A549 (cell line): ENCODE measurements at regions of chr1 and their contacts with region 1.

Region 1: DNA sequence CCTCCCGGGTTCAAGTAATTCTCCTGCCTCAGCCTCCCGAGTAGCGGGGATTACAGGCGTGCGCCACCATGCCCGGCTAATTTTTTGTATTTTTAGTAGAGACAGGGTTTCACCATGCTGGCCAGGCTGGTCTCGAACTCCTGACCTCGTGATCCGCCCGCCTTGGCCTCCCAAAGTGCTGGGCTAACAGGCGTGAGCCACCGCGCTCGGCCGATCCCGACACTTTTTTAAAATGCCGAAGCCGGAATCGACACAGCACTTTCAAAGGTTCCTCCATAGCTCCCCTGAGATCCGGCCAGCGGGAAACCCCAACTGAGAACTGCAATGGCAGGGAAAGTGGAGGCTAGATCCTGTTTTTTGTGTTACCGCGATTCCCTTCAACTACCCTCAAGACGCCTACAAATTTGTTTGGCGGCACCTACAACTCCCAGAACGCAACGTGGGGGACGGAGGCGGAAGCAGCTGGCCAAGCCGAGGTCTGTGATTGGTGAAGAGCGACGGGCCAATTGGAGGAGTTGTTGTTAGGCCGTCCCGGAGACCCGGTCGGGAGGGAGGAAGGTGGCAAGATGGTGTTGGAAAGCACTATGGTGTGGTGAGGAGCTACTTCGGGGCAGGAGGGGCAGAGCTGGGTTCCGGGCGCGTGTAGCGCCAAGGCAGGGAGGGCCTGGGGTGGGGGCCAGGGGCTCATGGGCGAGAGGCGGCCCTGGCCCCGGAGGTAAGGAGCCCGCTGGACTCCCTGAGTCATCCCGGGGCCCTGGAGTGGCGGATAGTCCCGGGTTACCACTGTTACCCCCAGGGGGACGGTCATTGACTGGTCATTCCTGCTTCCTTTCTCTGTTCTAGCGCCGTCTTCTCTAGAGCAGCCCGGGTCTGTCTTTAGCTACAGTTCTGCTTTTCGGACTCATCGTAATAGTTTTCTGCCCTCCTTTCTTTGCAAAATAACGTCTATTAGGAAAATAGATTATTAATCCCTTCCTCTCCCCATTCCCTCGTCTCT is at the start of gene PSMD4:
- DNase-seq: peak; percentile 99
- ATAC-seq: peak; percentile 96 to 99
- H3K4me3 ChIP-seq: peak within 1 kb of the TSS; percentile 77
- H3K27ac ChIP-seq: peak within 1 kb of the TSS; percentile 93 to 95
- H3K4me1 ChIP-seq: peaks cover 6% of the 10 kb centered on the region; the same call in 1 of the 3 replicates
- CTCF ChIP-seq: no peak
- EP300 ChIP-seq: no peak
- POLR2A ChIP-seq: peak; percentile 92
- RAD21 ChIP-seq: no peak
- polyA plus RNA-seq, gene PSMD4: 241 and 265 TPM in 2 replicates

Region 2: GRCh38 chr1:151047925-151048645 is 206.4 kb before region 1 on chr1:
- CTCF ChIA-PET with region 1: no interaction called
- POLR2A ChIA-PET with region 1: no interaction called
- DNase-seq: peak; percentile 83 to 96
- ATAC-seq: peak; percentile 87 to 91
- H3K4me3 ChIP-seq: peak overlapping the region; percentile 80
- H3K27ac ChIP-seq: peak overlapping the region; percentile 94 to 96
- H3K4me1 ChIP-seq: peaks cover 16% of the 10 kb centered on the region
- CTCF ChIP-seq: peak; percentile 67; the same call in 2 of the 3 replicates
- EP300 ChIP-seq: no peak
- POLR2A ChIP-seq: peak; percentile 53; the same call in 1 of the 2 replicates
- RAD21 ChIP-seq: peak in 1 of 2 experiments; percentile 17; a peak in 1 of 5 replicates

Region 3: DNA sequence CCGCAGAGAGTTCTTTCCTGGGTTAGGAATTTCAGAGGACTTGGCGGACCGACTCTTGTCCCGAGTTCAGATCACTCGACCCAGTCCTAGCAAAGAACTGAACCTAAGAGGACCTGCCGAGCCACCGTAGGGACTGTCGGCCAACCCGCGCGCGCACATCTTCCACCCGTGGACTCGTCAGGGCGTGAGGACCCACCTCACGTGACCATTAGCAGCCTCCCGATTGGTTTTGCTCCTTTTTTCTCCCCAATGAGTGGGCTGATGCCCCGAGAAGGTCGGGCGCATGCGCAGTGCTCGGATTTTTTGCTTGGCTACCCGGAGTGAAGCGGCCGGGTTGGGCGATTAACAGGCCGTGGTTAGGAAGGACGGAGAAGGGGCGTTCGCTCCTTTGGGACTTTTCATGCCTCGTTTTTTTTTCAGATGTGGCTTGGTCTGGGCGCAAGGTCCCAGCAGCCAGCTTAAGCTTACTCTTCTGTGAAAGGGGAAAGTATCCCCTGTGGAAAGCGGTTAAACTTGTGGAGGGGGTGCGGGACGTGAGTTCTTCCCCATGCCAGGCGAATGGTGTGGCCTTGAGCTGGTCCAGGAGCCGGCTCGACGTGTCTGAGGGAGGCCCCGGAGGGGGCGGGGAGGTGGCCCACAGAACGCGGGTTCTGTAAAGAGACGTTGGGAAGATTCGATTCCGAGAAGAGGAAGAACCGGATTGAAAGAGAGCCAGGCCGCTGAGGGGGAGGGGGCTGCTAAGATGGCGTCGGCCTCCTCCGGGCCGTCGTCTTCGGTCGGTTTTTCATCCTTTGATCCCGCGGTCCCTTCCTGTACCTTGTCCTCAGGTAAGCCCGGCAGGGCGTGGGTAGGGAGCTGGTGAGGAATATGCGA is 56.0 kb before region 1 on chr1 and contains the start of gene PIP5K1A:
- CTCF ChIA-PET with region 1: interaction called, 48 read pairs
- POLR2A ChIA-PET with region 1: interaction called, 8 read pairs
- DNase-seq: peak; percentile 98 to 99
- ATAC-seq: peak; percentile 79 to 81
- H3K4me3 ChIP-seq: peak within 1 kb of the TSS; percentile 78
- H3K27ac ChIP-seq: peak within 1 kb of the TSS; percentile 95
- H3K4me1 ChIP-seq: peaks cover 30% of the 10 kb centered on the region
- CTCF ChIP-seq: no peak
- EP300 ChIP-seq: no peak
- POLR2A ChIP-seq: peak; percentile 72
- RAD21 ChIP-seq: no peak
- polyA plus RNA-seq, gene PIP5K1A: 129 and 183 TPM in 2 replicates

Region 4: DNA sequence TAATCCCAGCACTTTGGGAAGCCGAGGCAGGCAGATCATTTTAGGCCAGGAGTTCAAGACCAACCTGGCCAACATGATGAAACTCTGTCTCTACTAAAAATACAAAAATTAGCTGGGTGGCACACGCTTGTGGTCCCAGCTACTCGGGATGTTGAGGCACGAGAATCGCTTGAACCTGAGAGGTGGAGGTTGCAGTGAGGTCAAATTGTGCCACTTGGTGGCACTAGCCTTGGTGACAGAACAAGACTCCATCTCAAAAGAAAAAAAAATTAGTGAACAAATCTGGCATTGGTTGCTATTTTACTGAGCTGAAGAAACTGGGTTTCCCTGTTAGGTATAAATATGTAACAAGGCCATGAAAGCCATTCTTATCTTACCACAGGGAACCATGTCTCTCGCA is 26.9 kb before region 1 on chr1:
- CTCF ChIA-PET with region 1: interaction called, 27 read pairs
- POLR2A ChIA-PET with region 1: interaction called, 7 read pairs
- DNase-seq: no peak
- ATAC-seq: no peak
- H3K4me3 ChIP-seq: no peak overlapping the region
- H3K27ac ChIP-seq: no peak overlapping the region
- H3K4me1 ChIP-seq: no peaks in the 10 kb centered on the region
- CTCF ChIP-seq: no peak
- EP300 ChIP-seq: no peak
- POLR2A ChIP-seq: no peak
- RAD21 ChIP-seq: no peak

Region 5: DNA sequence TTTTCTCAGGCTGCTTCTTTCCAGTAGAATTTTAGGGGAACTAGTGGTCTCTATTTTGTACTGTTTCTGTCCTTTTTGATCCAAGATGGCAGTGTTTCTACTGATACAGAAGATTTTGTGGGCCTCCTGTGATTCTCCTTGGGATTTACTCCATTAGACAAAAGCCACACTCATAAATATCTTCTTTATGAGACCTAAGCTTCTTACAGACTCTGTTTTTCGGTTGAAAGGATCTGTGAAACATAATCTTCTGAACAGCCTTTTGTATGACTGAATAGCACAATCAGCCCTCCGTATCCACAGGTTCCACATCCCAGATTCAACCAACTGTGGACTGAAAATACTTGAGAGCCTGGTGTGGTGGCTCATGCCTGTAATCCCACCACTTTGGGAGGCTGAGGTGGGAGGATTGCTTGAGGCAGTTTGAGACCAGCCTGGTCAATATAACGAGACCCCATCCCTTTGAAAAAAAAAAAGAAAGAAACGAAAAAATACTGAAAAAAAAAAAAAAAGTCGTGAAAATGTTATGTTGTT is 10.8 kb before region 1 on chr1:
- CTCF ChIA-PET with region 1: interaction called, 19 read pairs
- POLR2A ChIA-PET with region 1: interaction called, 4 read pairs
- DNase-seq: no peak
- ATAC-seq: no peak
- H3K4me3 ChIP-seq: no peak overlapping the region
- H3K27ac ChIP-seq: no peak overlapping the region
- H3K4me1 ChIP-seq: no peaks in the 10 kb centered on the region
- CTCF ChIP-seq: no peak
- EP300 ChIP-seq: no peak
- POLR2A ChIP-seq: no peak
- RAD21 ChIP-seq: no peak

Region 6: DNA sequence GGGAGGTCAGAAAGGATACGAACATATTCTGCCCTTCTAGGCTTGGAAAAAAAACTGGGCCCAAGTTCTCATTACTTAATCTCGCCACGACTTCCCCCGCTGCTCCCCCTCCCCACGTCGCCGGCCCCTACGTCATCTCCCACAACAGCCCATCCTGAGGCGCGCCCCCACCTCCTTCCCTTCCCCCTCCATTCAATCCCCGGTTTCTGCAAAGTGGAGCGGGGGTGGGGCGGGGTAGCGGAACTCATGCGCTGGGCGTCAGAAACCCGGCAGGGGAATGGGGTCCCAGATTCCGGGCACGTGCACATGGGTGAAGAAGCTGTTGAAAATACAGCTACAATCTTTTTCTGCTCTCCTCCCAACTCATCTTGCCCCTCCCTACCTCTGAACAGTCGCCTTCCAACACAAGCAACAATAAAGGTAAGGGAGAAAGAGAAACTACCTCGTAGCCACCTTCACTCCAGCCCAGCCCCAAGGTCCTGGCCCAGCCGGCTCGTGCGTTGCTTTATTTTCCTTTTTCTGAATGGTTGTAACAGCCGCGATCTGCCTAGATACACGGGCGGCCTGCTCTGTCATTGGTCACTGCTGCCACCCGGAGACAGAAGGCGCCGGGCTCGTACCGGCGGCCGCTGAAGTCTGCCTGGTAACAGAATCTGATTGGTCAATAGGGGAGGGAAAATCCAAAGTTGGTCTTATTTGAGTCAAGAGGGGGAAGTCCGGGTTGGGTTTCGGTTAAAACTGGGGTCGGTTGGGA is 92.4 kb after region 1 on chr1 and contains the start of gene RFX5:
- CTCF ChIA-PET with region 1: no interaction called
- POLR2A ChIA-PET with region 1: no interaction called
- DNase-seq: peak; percentile 97 to 99
- ATAC-seq: peak; percentile 97 to 99
- H3K4me3 ChIP-seq: peak within 1 kb of the TSS; percentile 65
- H3K27ac ChIP-seq: peak within 1 kb of the TSS; percentile 89 to 91
- H3K4me1 ChIP-seq: peaks cover 16% of the 10 kb centered on the region
- CTCF ChIP-seq: no peak
- EP300 ChIP-seq: no peak
- POLR2A ChIP-seq: peak; percentile 33
- RAD21 ChIP-seq: no peak
- polyA plus RNA-seq, gene RFX5: 55.9 and 70.0 TPM in 2 replicates